Sigmoid colon (tissue), 7 donors: ENCODE measurements at regions of chr6 and their contacts with region 1.

Region 1: GRCh38 chr6:7589949-7590917 is at the start of gene SNRNP48:
- DNase-seq: peak; percentile 97
- H3K4me3 ChIP-seq: peak within 1 kb of the TSS; percentile 80 to 93 (median 92)
- H3K27ac ChIP-seq: peak within 1 kb of the TSS; percentile 66 to 84 (median 78)
- H3K4me1 ChIP-seq: peaks cover 0 to 29% (median 24%) of the 10 kb centered on the region in 4 donors
- H3K27me3 ChIP-seq: no peaks in the 10 kb centered on the region
- CTCF ChIP-seq: no peak
- EP300 ChIP-seq: no peak
- POLR2A ChIP-seq: peak; percentile 43 to 81
- total RNA-seq, gene SNRNP48: 12.5 to 18.6 (median 17.4) TPM

Region 2: DNA sequence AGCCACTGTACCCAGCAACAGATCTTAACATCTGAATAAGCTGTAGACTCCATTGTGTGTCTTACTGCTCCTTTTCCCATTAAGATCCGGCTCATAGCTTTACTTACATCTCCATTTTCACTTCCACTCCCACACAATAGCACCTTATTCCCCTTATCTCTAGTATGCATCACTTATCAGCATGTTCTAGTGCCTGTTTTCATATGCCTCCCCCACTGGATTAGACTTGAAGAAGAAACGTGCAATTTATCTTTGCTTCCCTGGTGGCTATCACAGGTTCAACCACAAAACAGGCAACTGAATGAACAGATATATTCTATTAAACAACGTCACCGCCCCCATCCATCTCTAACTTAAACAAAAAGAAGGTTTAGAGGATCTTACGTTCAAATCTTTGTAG is 289.3 kb before region 1 on chr6:
- intact Hi-C with region 1: loop called (anchors 10 kb)
- DNase-seq: no peak
- H3K4me3 ChIP-seq: no peak overlapping the region
- H3K27ac ChIP-seq: no peak overlapping the region
- H3K4me1 ChIP-seq: no peaks in the 10 kb centered on the region
- H3K27me3 ChIP-seq: no peaks in the 10 kb centered on the region
- CTCF ChIP-seq: no peak
- EP300 ChIP-seq: no peak
- POLR2A ChIP-seq: no peak

Region 3: GRCh38 chr6:7389451-7390225 is 200.6 kb before region 1 on chr6 and contains the starts of genes CAGE1 and RIOK1:
- intact Hi-C with region 1: loop called (anchors 5 kb)
- DNase-seq: peak; percentile 97
- H3K4me3 ChIP-seq: peak within 1 kb of the TSS; percentile 50 to 77 (median 67)
- H3K27ac ChIP-seq: peak within 1 kb of the TSS; percentile 87 to 93 (median 91)
- H3K4me1 ChIP-seq: peaks cover 0 to 29% (median 22%) of the 10 kb centered on the region in 4 donors
- H3K27me3 ChIP-seq: no peaks in the 10 kb centered on the region
- CTCF ChIP-seq: peak in 1 of 4 experiments; percentile 7
- EP300 ChIP-seq: no peak
- POLR2A ChIP-seq: peak; percentile 51 to 79
- total RNA-seq, gene CAGE1: not detected
- total RNA-seq, gene RIOK1: 14.7 to 16.9 (median 15.9) TPM

Region 4: GRCh38 chr6:8063761-8064637 is 473.8 kb after region 1 on chr6 and contains the start of gene BLOC1S5:
- intact Hi-C with region 1: loop called (anchors 10 kb)
- DNase-seq: peak; percentile 98
- H3K4me3 ChIP-seq: peak within 1 kb of the TSS; percentile 62 to 99 (median 82)
- H3K27ac ChIP-seq: peak within 1 kb of the TSS; percentile 87 to 96 (median 89)
- H3K4me1 ChIP-seq: peaks cover 0 to 16% (median 7%) of the 10 kb centered on the region in 4 donors
- H3K27me3 ChIP-seq: no peaks in the 10 kb centered on the region
- CTCF ChIP-seq: no peak
- EP300 ChIP-seq: no peak
- POLR2A ChIP-seq: peak; percentile 25 to 44
- total RNA-seq, gene BLOC1S5: 10.8 to 16.2 (median 12.8) TPM